Activated CD4-positive, alpha-beta memory T cell treated with anti-CD3 and anti-CD28 coated beads for 36 hours (primary cell): ENCODE measurements at regions of chr1 and their contacts with region 1.

Region 1: DNA sequence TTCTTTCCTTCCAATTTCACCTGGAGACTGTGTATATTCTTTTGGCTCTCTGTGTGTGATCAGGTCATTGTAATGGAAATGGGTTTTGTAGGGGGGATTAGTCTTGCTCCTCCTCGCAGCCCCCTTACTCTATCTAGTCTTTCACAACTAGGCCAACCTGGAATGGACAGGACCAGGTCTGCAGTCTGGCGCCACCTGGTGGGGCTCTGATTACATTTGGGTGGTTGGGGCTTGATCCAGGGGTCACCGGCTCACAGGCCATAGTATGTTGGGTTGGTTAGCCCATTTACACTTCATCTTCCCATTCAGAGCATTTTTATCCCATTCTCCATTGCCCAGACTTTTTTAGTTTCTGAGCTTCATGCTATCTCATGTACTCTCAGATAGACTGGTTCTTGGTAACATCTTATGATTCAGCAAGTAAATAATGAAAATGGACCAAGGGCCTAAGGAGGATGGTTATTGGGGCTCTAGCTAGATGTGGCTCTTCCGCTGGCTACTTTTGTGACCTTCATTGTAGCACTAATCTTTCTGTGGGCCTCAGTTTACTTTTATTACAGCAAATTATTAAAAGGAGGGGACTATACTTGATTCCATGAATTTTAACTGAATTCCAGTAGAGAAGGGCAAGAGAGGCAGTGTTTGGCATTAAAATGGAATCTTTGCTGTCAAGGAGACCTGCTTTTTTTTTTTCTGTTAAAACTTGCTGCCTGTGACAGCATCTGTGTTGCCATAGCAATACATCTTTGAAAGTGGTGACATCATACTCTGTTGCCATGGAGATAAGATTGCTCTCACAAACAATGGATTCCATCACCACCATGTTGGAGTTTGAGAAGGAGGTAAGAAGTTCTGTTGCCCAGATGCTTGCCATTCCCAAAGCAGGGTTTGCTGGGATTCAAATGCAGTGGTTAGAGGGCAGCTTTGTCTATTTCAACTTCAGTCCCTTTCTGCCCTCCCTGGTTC is 150.1 kb downstream of the PLXNA2 start:
- DNase-seq: peak; percentile 70
- H3K4me3 Mint-ChIP-seq: no peak overlapping the region
- H3K27ac Mint-ChIP-seq: no peak overlapping the region
- H3K4me1 Mint-ChIP-seq: no peaks in the 10 kb centered on the region
- H3K27me3 Mint-ChIP-seq: no peaks in the 10 kb centered on the region

Region 2: DNA sequence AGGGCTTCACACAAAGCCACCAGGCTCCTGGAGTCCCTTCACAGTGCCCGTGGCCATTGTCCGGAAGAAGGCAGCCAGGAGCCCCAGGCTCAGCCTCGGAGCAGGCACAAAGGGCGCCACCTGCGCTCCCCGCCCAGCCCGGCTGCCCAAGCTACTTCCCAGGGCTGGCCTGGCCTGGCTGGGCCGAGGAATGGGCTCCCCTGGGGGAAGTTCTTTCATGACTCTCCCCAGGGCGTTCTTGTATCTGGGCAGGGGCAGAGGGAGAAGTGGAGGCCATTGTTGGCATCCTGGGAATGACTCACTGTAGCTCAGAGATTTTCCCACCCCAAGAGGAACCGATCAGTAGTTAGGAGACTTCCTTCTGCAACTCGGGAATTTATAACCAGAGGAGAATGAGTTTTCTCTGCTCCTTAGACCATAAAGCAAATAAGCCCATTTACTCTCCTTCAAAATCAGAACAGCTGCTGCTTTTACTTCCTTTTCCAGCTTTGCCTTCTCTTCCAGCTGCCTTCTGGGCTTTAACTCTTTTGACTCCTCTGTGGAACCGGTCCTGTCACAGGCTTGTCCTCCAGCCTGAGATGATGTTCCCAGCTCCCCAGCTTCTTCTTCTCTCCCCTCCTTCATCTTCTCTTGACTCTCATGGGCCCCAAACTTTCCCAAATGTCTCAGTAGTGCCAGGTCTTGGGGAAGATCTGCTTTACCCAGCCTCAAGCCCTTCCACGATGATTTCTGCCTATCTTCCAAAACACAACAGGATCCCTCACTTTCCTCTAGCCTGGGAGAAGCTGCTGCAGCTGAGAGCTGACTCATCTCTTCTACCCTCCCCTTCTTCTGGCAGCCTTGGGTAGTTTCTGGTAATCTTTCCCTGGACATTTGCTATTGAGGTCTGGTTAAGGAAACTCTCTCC is 64.4 kb before region 1 on chr1:
- CTCF ChIA-PET with region 1: interaction called, 111 read pairs
- POLR2A ChIA-PET with region 1: no interaction called
- intact Hi-C with region 1: no loop called
- DNase-seq: no peak
- H3K4me3 Mint-ChIP-seq: no peak overlapping the region
- H3K27ac Mint-ChIP-seq: no peak overlapping the region
- H3K4me1 Mint-ChIP-seq: no peaks in the 10 kb centered on the region
- H3K27me3 Mint-ChIP-seq: no peaks in the 10 kb centered on the region

Region 3: DNA sequence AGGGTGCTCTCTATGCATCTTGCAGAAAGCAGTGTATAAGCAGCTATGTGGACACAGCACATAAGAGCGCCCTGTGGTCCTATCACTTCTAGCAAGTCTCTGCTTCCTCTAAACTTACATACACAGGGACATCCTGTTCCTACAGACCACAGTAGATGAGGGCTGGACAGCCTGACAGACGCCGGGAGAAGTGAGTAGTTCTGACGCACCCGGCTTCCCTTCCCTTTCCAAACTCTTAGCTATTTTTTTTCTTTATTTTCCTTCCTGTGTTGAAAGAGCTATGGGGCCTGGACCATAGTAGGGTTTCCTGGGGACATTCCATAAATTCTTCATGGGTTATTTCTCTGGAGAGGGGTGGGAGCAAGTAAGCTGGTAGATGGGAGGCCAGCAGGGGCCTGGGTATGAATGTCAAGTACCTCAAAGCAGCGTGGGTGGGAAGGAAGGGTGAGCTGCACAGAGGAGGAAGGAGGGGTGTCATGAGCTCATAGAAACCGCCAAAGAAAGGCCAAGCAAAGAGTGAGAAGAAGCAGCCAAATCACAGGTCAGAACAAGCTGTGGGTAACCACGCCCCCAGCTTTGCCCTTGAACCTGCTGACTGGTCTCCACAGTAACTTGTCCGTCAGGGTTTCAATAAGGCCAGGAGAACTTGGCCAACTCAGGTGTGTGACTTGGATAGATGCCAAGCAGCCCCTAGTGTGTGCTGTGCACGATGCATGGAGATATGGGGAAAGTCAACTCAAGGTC is 113.5 kb after region 1 on chr1:
- CTCF ChIA-PET with region 1: no interaction called
- POLR2A ChIA-PET with region 1: no interaction called
- intact Hi-C with region 1: no loop called
- DNase-seq: no peak
- H3K4me3 Mint-ChIP-seq: no peak overlapping the region
- H3K27ac Mint-ChIP-seq: no peak overlapping the region
- H3K4me1 Mint-ChIP-seq: no peaks in the 10 kb centered on the region
- H3K27me3 Mint-ChIP-seq: peaks cover 1% of the 10 kb centered on the region

Region 4: DNA sequence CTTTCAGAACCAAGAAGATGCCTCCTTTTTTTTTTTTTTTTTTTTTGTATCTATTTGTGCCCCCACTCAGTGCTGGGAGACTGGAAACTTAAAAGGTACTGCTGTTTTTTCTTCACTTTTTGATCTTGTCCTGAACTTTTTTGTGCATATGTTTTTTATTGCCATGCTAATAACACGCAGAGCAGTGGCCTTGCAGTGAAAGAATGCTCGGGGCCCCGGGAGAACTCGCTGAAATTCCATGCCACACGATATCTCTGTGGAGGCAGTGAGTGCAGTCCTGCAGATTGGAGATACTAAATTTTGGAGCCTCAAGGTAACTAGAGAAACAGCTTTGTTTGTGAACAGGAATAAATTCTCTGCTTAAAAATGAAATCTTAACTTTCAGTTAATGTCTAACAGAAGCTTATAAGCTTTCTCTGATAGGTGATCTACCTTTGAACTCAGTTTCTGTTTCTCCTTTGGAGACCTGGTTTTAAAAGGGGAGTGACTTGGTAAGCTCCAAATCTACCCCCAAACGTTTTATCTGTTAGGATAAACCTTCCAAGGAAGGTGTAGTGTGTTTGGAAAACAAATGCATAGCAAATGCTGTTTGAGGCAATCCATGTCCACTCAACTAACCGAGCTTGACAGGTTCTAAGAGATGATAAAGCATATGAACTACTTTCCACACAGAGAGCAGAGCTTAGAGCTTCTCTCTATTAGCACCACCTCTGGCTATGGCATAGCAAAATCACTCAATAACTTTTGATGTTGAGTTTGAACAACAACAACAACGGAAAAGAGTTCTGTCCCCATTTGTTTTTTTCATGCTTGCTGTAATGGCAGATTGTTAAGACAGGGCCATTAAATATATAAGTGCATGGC is 263.8 kb after region 1 on chr1:
- CTCF ChIA-PET with region 1: no interaction called
- POLR2A ChIA-PET with region 1: no interaction called
- intact Hi-C with region 1: no loop called
- DNase-seq: no peak
- H3K4me3 Mint-ChIP-seq: no peak overlapping the region
- H3K27ac Mint-ChIP-seq: no peak overlapping the region
- H3K4me1 Mint-ChIP-seq: no peaks in the 10 kb centered on the region
- H3K27me3 Mint-ChIP-seq: peaks cover 3% of the 10 kb centered on the region